Breast epithelium (tissue), 4 donors: ENCODE measurements at regions of chr3 and their contacts with region 1.

Region 1: GRCh38 chr3:163779396-163780308 is 1298.6 kb downstream of the SI start:
- DNase-seq: no peak
- H3K4me3 ChIP-seq: no peak overlapping the region
- H3K27ac ChIP-seq: no peak overlapping the region
- H3K4me1 ChIP-seq: no peaks in the 10 kb centered on the region
- H3K27me3 ChIP-seq: no peaks in the 10 kb centered on the region
- CTCF ChIP-seq: no peak
- POLR2A ChIP-seq: no peak

Region 2: DNA sequence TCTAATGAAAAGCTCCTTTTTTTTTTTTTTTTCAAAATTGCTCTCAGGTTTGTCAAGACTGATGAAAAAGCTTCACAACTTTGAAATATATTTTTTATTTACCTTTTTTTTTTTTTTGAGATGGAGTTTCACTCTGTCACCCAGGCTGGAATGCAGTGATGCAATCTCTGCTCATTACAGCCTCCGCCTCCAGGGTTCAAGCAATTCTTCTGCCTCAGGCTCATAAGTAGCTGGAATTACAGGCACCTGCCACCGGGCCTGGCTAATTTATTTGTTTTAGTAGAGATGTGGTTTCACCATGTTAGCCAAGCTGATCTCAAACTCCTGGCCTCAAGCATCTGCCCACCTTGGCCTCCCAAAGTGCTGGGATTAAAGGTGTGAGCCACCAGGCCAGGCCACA is 768.1 kb before region 1 on chr3:
- intact Hi-C with region 1: loop called (anchors 5 kb)
- DNase-seq: no peak
- H3K4me3 ChIP-seq: no peak overlapping the region
- H3K27ac ChIP-seq: no peak overlapping the region
- H3K4me1 ChIP-seq: no peaks in the 10 kb centered on the region
- H3K27me3 ChIP-seq: no peaks in the 10 kb centered on the region
- CTCF ChIP-seq: no peak
- POLR2A ChIP-seq: no peak

Region 3: GRCh38 chr3:163561151-163561550 is 218.5 kb before region 1 on chr3:
- intact Hi-C with region 1: no loop called
- DNase-seq: no peak
- H3K4me3 ChIP-seq: no peak overlapping the region
- H3K27ac ChIP-seq: no peak overlapping the region
- H3K4me1 ChIP-seq: no peaks in the 10 kb centered on the region
- H3K27me3 ChIP-seq: no peaks in the 10 kb centered on the region
- CTCF ChIP-seq: no peak
- POLR2A ChIP-seq: no peak